Mammary epithelial cell (primary cell): ENCODE measurements at regions of chr17 and their contacts with region 1.

Region 1: DNA sequence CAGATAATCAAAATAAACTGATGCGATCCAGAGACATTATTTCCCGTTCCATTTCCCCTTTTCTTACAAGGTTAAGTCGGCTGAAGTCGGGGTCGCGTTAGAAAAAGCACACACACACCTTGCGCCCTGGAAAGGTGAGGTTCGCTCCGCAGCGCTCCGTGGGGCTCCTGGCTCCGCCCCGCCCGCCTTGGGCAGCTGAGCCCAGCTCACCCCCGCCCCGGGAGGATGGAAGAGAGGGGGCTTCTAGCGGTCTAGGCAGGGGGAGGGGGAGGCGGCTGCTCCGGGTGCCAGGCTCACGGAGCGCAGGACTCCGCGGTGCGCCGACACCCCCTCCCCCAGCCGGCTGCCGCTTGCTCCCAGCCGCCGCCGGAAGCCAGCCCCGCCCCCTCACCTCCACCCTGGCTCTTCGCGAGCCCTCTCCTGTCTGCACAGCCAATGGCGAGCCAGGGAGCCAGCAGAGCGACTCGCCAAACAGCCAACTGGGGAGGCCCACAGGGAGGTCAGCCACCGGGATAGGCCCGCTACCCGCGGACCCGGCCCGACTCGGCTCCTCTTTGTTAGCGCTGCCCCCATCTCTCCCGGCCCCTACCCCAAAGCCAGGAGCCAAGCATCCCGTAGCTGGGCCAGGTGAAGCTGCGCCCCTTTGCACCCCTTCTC is 30.4 kb downstream of the FAM222B start:
- DNase-seq: peak; percentile 97
- H3K4me3 ChIP-seq: peak overlapping the region; percentile 75 to 97 (median 97)
- H3K27ac ChIP-seq: peak overlapping the region; percentile 99
- H3K4me1 ChIP-seq: peaks cover 34% of the 10 kb centered on the region
- H3K27me3 ChIP-seq: no peaks in the 10 kb centered on the region
- CTCF ChIP-seq: no peak

Region 2: DNA sequence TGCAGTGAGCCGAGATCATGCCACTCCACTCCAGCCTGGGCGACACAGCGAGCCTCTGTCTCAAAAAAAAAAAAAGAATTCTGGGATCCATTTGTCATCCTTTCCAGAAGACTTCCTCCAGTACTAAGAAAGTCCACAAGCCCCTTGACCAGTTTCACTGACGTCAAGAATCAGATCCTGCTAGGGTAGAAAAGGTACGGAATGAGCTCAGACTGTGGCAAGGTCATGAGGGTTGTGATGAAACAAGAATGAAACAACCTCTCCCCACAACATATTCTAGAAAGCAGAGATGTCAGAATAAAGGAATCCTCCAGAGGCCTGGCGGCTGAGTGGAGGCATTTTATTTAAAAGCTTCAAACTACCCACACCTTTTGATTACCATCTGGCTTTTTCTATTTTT is 38.5 kb before region 1 on chr17:
- CTCF ChIA-PET with region 1: no interaction called
- dilution Hi-C with region 1: loop called (anchors 5 kb)
- in situ Hi-C with region 1: no loop called
- intact Hi-C with region 1: no loop called
- DNase-seq: peak; percentile 14
- H3K4me3 ChIP-seq: no peak overlapping the region
- H3K27ac ChIP-seq: no peak overlapping the region
- H3K4me1 ChIP-seq: peaks cover 22% of the 10 kb centered on the region
- H3K27me3 ChIP-seq: no peaks in the 10 kb centered on the region
- CTCF ChIP-seq: no peak

Region 3: GRCh38 chr17:28842282-28843012 is 30.2 kb after region 1 on chr17 and contains the start of gene FAM222B:
- CTCF ChIA-PET with region 1: no interaction called
- dilution Hi-C with region 1: no loop called
- in situ Hi-C with region 1: no loop called
- intact Hi-C with region 1: loop called (anchors 5 kb)
- DNase-seq: peak; percentile 76
- H3K4me3 ChIP-seq: peak within 1 kb of the TSS; percentile 84 to 95 (median 91)
- H3K27ac ChIP-seq: peak within 1 kb of the TSS; percentile 54
- H3K4me1 ChIP-seq: peaks cover 3% of the 10 kb centered on the region
- H3K27me3 ChIP-seq: no peaks in the 10 kb centered on the region
- CTCF ChIP-seq: no peak
- total RNA-seq, gene FAM222B: 11.0 to 28.9 TPM